Dendritic cell treated with granulocyte-macrophage colony-stimulating factor and Interleukin-4, amounts not matched to agents 40 ng/mL and 50 ng/mL, for 4 days (primary cell): ENCODE measurements at regions of chr10 and their contacts with region 1.

Region 1: DNA sequence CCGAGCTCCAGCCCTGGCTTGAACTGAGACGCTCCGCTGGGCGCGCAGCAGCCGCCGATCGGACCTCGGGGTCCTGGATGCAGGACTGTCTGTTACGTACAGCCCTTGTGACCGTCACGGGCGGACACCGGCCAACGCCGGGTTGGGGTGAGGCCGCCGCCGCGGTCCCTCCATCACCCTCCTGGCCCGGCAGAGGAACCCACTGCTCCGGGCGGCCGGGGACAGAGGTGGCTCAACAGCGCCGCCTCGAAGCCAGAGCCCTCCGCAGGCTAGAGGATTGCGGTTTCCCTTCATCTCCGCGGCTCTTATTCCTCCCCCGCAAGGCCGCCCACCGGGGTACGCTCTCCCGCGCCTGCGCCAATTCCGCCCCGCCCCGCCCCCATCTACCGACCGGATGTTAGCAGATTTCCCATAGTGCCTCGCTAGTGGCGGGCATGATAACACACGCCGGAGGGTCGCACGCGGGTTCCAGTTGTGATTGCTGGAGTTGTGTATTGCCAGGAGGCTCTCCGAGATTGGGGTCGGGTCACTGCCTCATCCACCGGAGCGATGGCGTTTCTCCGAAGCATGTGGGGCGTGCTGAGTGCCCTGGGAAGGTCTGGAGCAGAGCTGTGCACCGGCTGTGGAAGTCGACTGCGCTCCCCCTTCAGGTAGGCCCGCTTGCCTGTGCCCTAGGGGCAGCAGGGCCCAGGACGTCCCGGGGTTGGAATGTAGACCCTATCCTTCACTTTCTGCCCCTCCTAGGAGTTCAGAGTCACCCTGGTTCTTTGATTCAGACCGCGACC is at the start of gene TFAM:
- H3K4me3 Mint-ChIP-seq: peak within 1 kb of the TSS; percentile 98
- H3K27ac Mint-ChIP-seq: peak within 1 kb of the TSS; percentile 95
- H3K4me1 Mint-ChIP-seq: peaks cover 41% of the 10 kb centered on the region
- H3K27me3 Mint-ChIP-seq: no peaks in the 10 kb centered on the region

Region 2: DNA sequence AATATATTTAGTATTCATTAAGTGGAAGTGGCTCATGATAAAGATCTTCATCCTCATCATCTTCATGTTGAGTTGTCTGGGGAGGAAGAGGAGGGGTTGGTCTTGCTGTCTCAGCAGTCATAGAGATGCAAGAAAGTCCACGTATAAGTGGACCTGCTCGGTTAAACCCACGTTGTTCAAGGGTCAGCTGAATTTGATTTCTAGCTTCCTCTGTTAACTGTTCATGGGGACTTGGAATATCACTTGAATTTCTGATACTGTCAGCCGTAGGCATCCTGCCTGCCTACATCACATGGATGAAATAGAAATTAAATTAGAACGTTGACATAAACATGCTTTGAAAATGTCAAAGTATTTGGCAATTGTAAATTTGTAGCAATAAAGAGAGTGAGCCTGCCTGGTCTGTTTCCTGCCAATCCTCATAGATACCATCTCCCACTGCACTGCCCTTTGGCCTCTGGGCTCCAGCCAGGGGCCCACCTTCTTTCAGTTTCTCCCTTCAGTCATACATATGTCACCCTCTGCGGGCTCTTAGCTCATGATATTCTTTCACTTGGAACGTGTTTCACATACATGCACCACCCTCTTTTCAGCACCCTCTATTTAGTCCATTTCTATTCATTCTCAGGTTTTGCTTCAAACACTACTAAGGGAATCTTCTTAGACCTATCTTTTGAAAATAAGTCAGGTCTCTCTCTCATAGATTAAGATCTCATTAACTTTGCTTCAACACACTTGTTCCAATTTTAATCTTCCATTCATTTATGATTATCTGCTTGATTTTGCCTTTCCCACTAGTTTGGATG is 493.8 kb before region 1 on chr10:
- intact Hi-C with region 1: no loop called
- H3K4me3 Mint-ChIP-seq: no peak overlapping the region
- H3K27ac Mint-ChIP-seq: no peak overlapping the region
- H3K4me1 Mint-ChIP-seq: no peaks in the 10 kb centered on the region
- H3K27me3 Mint-ChIP-seq: no peaks in the 10 kb centered on the region

Region 3: DNA sequence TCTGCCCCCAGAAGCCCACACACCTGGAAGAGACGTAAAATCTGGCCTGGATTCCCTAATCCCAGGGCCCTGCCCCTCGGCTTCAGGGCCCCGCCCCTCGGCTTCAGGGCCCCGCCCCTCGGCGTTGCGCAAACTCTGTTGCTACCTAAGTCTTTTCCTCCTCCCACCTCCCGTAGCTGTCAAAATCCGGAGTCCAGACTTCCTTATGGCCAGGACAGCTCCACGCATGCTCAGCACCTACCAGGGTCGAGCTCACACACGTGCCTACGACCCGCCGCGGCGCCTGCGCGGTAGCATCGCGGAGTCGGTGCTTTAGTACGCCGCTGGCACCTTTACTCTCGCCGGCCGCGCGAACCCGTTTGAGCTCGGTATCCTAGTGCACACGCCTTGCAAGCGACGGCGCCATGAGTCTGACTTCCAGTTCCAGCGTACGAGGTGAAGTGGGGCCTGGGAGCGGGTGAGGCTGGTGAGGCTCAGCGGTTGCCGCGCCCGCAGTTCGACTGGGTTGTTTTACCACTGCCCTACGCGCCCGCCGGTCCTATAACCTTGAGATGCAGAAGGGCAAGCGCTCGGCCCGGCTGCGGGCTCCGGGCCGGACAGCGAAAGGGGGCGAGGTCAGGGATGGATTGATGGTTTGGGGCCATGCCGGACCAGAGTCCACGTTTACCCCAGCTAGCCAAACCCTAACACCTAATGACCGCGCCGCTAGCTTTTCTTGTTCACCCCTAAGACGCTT is 116.2 kb before region 1 on chr10 and contains the start of gene CISD1:
- intact Hi-C with region 1: loop called (anchors 1 kb)
- H3K4me3 Mint-ChIP-seq: peak within 1 kb of the TSS; percentile 97
- H3K27ac Mint-ChIP-seq: peak within 1 kb of the TSS; percentile 98
- H3K4me1 Mint-ChIP-seq: peaks cover 3% of the 10 kb centered on the region
- H3K27me3 Mint-ChIP-seq: no peaks in the 10 kb centered on the region

Region 4: DNA sequence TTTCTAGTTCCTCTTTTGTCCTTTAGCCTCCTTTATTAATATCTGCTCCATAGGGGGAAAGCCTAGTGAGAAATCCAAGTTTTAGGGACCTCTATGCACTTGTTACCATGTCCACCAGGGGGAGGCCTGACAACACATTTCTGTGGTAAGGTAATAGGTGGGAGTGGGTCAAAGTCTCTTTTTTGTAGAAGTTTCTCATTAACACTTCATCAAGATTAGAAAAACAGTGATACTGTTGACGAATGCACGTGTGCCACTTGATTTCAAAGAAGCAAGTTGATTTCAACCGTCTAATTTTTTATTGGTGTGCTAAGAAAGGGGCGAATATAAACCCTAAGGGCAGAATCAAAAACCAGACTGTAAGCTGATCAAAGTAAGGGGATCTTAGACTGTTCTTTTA is 85.6 kb before region 1 on chr10:
- intact Hi-C with region 1: loop called (anchors 2 kb)
- H3K4me3 Mint-ChIP-seq: no peak overlapping the region
- H3K27ac Mint-ChIP-seq: no peak overlapping the region
- H3K4me1 Mint-ChIP-seq: no peaks in the 10 kb centered on the region
- H3K27me3 Mint-ChIP-seq: peaks cover 14% of the 10 kb centered on the region

Region 5: GRCh38 chr10:58334817-58335305 is 50.3 kb before region 1 on chr10 and contains the start of gene UBE2D1:
- intact Hi-C with region 1: loop called (anchors 2 kb)
- H3K4me3 Mint-ChIP-seq: peak within 1 kb of the TSS; percentile 83
- H3K27ac Mint-ChIP-seq: peak within 1 kb of the TSS; percentile 80
- H3K4me1 Mint-ChIP-seq: peaks cover 61% of the 10 kb centered on the region
- H3K27me3 Mint-ChIP-seq: no peaks in the 10 kb centered on the region